ENCODE measurements at regions of chr1 and their contacts with region 1.

Region 1: GRCh38 chr1:246450611-246451251 is 56.3 kb downstream of the SMYD3 start:
- DNase-seq: no peak
- H3K4me3 Mint-ChIP-seq: no peak overlapping the region
- H3K27ac Mint-ChIP-seq: no peak overlapping the region
- H3K4me1 Mint-ChIP-seq: peaks cover 20% of the 10 kb centered on the region
- H3K27me3 Mint-ChIP-seq: no peaks in the 10 kb centered on the region
- CTCF ChIP-seq: peak; percentile 64

Region 2: GRCh38 chr1:246012341-246012740 is 438.4 kb before region 1 on chr1:
- CTCF ChIA-PET with region 1: no interaction called
- intact Hi-C with region 1: loop called (anchors 1 kb)
- DNase-seq: peak; percentile 17
- H3K4me3 Mint-ChIP-seq: no peak overlapping the region
- H3K27ac Mint-ChIP-seq: no peak overlapping the region
- H3K4me1 Mint-ChIP-seq: no peaks in the 10 kb centered on the region
- H3K27me3 Mint-ChIP-seq: no peaks in the 10 kb centered on the region
- CTCF ChIP-seq: peak; percentile 55

Region 3: GRCh38 chr1:246117066-246117791 is 333.5 kb before region 1 on chr1:
- CTCF ChIA-PET with region 1: no interaction called
- intact Hi-C with region 1: loop called (anchors 5 kb)
- DNase-seq: peak; percentile 67
- H3K4me3 Mint-ChIP-seq: no peak overlapping the region
- H3K27ac Mint-ChIP-seq: no peak overlapping the region
- H3K4me1 Mint-ChIP-seq: peaks cover 8% of the 10 kb centered on the region
- H3K27me3 Mint-ChIP-seq: no peaks in the 10 kb centered on the region
- CTCF ChIP-seq: peak; percentile 48

Region 4: GRCh38 chr1:246280551-246280950 is 170.2 kb before region 1 on chr1:
- CTCF ChIA-PET with region 1: no interaction called
- intact Hi-C with region 1: loop called (anchors 5 kb)
- DNase-seq: peak; percentile 7
- H3K4me3 Mint-ChIP-seq: no peak overlapping the region
- H3K27ac Mint-ChIP-seq: no peak overlapping the region
- H3K4me1 Mint-ChIP-seq: no peaks in the 10 kb centered on the region
- H3K27me3 Mint-ChIP-seq: no peaks in the 10 kb centered on the region
- CTCF ChIP-seq: no peak

Region 5: DNA sequence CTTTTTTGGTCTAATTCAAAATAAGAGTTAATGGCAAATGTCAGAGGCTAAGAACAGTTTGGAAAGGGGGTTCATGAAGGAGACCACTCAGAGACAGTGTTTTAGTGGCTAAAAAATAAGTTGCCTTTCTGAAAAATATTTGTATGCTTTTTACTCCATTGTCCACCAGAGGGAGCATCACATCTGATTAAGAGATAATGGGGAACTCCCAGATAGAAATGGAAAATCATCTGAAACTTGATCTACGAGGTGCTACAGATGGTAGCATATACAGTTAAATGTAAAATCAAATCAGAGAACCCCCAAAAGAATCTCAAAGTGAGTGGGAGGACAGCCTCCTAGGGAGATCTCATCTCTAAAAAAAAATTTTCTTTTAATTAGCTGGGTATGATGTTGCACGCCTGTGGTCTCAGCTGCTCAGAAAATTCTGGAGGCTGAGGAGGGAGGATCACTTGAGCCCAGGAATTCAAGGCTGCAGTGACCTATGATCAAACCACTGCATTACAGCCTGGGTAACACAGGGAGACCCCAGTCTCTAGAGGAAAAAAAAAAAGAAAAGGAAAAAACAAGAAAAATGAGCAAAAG is 46.7 kb after region 1 on chr1:
- CTCF ChIA-PET with region 1: no interaction called
- intact Hi-C with region 1: loop called (anchors 1 kb)
- DNase-seq: peak; percentile 44
- H3K4me3 Mint-ChIP-seq: no peak overlapping the region
- H3K27ac Mint-ChIP-seq: no peak overlapping the region
- H3K4me1 Mint-ChIP-seq: peaks cover 22% of the 10 kb centered on the region
- H3K27me3 Mint-ChIP-seq: no peaks in the 10 kb centered on the region
- CTCF ChIP-seq: peak; percentile 46

Region 6: DNA sequence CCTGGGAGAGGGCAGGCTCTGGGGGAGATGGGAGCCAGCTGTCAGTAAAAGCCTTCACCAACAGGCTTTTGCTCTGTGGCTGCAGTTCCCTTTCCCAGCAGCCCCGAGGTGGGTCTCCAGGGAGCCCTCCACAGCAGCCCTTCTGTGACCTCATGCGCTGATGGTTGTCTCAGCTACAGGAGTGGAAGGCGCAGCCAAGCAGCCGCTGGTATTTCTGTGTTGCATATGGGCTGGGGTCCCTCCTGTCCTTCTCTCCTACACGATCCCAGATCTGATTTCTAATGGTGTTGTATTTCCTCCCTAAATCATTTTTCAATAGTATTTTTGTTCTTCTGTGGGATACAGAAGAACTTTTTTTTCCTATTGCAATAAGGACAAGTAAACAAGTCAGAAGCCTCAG is 231.2 kb after region 1 on chr1:
- CTCF ChIA-PET with region 1: no interaction called
- intact Hi-C with region 1: no loop called
- DNase-seq: no peak
- H3K4me3 Mint-ChIP-seq: no peak overlapping the region
- H3K27ac Mint-ChIP-seq: no peak overlapping the region
- H3K4me1 Mint-ChIP-seq: no peaks in the 10 kb centered on the region
- H3K27me3 Mint-ChIP-seq: peaks cover 9% of the 10 kb centered on the region
- CTCF ChIP-seq: no peak

Measured in Calu3 (cell line).